Ascending aorta (tissue), 2 donors: ENCODE measurements at regions of chr11 and their contacts with region 1.

Region 1: DNA sequence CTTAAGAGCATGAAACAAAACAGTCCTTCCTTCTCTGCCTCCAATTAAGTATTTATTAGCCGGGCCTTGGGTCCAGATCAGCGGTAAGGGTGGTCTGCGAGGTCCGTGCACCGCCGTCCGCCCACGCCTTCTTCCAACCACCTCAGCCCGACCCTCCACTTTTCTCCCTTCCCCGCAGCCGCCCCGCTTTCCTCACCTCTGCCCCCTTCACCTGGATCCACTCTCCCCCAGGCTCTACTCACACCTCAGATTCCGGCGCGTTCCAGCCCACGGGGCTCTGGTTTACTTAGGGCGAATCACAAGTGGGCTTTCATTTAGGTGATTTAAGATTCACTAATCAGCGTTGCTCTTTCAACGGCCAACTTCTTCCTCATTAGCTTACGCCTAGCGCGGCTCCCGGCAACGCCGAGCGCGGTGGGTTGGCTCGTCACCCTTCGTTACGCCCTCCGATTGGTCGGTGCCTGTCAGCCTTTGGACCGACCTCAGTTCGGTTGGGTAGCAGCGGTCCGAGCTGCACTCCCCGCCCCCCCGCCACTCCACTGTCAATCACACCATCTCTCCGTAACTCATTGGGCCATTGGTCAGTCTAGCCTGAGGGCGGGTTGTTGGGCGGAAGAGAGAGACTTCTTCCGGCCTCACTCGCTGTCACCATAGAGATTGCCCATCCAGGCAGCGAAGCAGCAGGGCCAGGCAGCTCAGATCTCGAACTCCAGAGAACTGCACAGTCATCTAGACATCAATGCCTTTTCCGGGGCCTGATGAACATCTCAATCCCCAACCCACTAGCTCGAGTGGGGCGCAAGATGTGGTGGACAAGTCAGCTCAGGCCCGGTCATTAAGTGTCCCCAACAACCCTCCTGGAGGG is at the start of gene TMEM218:
- DNase-seq: peak; percentile 98 to 99
- H3K4me3 ChIP-seq: peak within 1 kb of the TSS; percentile 71 to 76
- H3K27ac ChIP-seq: peak within 1 kb of the TSS; percentile 69
- H3K4me1 ChIP-seq: peaks cover 0 to 4% of the 10 kb centered on the region in 2 donors
- H3K27me3 ChIP-seq: no peaks in the 10 kb centered on the region
- CTCF ChIP-seq: no peak
- total RNA-seq, gene TMEM218: 0.64 TPM

Region 2: GRCh38 chr11:124114942-124115781 is 996.4 kb before region 1 on chr11 and contains the start of gene VWA5A:
- intact Hi-C with region 1: loop called (anchors 10 kb)
- DNase-seq: peak; percentile 44 to 92
- H3K4me3 ChIP-seq: peak within 1 kb of the TSS; percentile 49 to 72
- H3K27ac ChIP-seq: peak within 1 kb of the TSS; percentile 57 to 61
- H3K4me1 ChIP-seq: peaks cover 0 to 6% of the 10 kb centered on the region in 2 donors
- H3K27me3 ChIP-seq: no peaks in the 10 kb centered on the region
- CTCF ChIP-seq: no peak
- total RNA-seq, gene VWA5A: 7.6 TPM

Region 3: DNA sequence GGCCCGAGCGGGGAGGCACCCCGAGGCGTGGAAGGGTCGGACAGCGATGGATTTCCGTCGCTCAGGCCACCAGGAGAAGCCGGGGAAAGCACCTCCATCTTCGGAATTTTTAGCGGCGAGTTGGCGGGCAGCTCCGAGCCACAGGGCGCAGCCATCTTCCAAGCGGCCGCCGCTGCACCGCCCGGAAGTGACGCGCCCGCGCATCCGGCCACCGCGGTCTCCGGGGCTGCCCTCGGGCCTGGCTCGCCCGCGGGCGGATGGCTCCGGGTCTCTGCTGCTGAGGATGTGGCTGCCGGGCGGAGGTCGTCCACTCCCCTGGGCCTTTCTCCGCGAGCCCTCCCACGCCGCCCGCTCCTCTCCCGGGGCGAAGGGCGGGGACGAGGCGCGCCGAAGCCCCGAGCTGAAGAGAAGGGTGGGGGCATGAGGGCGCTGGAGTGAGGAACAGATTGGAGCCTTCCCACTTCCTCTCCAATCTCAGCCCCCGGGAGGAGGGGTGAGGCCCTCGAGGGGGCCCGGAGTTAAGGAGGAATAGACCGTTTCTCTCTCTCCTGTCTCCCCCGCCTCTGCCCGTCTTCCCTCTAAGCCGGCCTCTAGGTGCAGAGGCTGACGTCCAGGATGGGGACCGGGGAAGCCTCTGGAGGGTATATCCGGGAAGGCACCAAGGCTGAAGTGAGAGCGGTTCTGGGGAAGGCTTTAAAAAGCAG is 311.2 kb before region 1 on chr11 and contains the start of gene MSANTD2:
- intact Hi-C with region 1: loop called (anchors 10 kb)
- DNase-seq: peak; percentile 19 to 87
- H3K4me3 ChIP-seq: peak within 1 kb of the TSS; percentile 81 to 98
- H3K27ac ChIP-seq: peak within 1 kb of the TSS; percentile 99
- H3K4me1 ChIP-seq: peaks cover 13 to 16% of the 10 kb centered on the region in 2 donors
- H3K27me3 ChIP-seq: no peaks in the 10 kb centered on the region
- CTCF ChIP-seq: no peak
- total RNA-seq, gene MSANTD2: 21.4 TPM

Region 4: DNA sequence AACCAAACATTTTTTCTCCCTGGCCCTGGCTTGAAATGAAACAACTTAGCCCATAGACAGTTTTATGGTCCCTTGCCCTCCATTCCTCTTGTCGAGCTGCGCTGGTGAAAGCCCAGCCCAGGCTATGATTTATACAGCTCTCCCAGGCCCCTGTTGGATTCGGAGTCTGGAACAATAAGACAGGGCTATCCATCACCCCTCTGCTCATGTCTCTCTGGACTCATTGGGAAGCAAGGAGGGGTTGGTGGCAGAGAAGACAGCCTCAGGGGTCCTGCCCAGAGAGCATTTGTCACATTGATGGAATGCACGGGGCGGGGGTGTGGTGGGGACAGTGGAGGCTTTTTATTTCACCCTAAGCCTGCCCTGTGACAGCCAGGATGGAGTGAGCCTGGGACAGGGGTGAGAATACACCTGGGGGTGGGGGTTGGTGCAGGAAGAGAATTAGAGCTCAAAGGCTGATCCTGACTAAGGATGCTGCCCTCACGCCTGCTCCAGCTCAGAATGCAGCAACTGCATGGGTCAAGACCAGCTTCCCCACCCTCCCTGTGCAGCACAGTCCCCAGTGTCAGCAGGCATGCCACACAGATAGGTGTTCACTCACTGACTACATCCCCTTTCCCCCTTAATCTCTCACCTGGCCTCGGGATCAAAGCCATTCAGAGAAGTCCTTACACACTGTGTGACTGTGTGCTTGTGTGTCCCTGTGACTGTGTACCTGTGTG is 43.0 kb after region 1 on chr11:
- intact Hi-C with region 1: no loop called
- DNase-seq: peak in 1 of 2 donors; percentile 42
- H3K4me3 ChIP-seq: no peak overlapping the region
- H3K27ac ChIP-seq: no peak overlapping the region
- H3K4me1 ChIP-seq: no peaks in the 10 kb centered on the region
- H3K27me3 ChIP-seq: no peaks in the 10 kb centered on the region
- CTCF ChIP-seq: no peak

Region 5: GRCh38 chr11:125164422-125165110 is 53.0 kb after region 1 on chr11 and contains the start of gene PKNOX2:
- intact Hi-C with region 1: loop called (anchors 2 kb)
- DNase-seq: peak in 1 of 2 donors; percentile 83
- H3K4me3 ChIP-seq: peak within 1 kb of the TSS; percentile 52 to 82
- H3K27ac ChIP-seq: peak within 1 kb of the TSS; percentile 80 to 91
- H3K4me1 ChIP-seq: peaks cover 8 to 26% of the 10 kb centered on the region in 2 donors
- H3K27me3 ChIP-seq: no peaks in the 10 kb centered on the region
- CTCF ChIP-seq: peak; percentile 40 to 85 (median 73)
- total RNA-seq, gene PKNOX2: 12.1 TPM

Region 6: DNA sequence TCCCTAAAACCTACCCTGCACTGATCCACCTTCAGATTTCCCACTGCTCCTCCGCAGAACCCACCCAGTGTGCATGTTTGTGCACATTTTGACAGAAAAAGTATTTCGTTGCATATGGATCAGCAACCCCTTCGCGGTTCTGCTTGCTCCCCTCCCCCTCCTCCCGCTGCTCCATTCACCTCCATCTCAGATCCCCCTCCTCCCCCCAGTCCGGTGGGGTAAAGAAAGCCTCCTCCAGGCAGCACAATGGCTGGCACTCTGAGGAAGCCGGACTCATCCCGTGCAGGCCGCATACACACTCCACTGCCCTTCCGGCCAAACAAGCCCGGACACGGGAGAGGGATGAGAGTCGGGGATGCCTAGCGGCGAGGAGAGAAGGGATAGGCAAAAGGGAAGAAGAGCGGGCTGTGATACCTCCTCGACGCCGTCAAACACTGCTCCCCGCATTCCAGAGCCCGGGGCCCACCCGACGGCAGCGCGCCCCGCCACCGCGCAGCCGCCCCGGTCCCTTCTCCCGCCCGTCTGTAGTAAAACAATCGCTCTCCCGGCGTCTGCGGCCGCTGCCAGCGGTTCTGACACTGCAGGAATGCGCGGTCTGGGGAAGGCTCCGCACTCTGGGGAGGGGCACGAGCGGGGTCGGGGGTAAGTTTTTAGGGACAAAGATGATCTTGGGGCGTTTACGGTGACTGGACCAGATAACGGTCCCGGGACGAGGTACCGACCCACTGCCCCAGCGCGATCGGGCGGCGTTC is 383.6 kb after region 1 on chr11:
- intact Hi-C with region 1: loop called (anchors 10 kb)
- DNase-seq: peak in 1 of 2 donors; percentile 72
- H3K4me3 ChIP-seq: peak overlapping the region; percentile 63 to 98
- H3K27ac ChIP-seq: peak overlapping the region; percentile 80 to 96
- H3K4me1 ChIP-seq: peaks cover 7 to 8% of the 10 kb centered on the region in 2 donors
- H3K27me3 ChIP-seq: no peaks in the 10 kb centered on the region
- CTCF ChIP-seq: no peak

Region 7: GRCh38 chr11:126268708-126269579 is 1157.4 kb after region 1 on chr11 and contains the starts of genes FOXRED1 and SRPRA:
- intact Hi-C with region 1: loop called (anchors 5 kb)
- DNase-seq: peak; percentile 97 to 100
- H3K4me3 ChIP-seq: peak within 1 kb of the TSS; percentile 81 to 93
- H3K27ac ChIP-seq: peak within 1 kb of the TSS; percentile 90 to 91
- H3K4me1 ChIP-seq: peaks cover 0 to 13% of the 10 kb centered on the region in 2 donors
- H3K27me3 ChIP-seq: no peaks in the 10 kb centered on the region
- CTCF ChIP-seq: no peak
- total RNA-seq, gene FOXRED1: 1.8 TPM
- total RNA-seq, gene SRPRA: 49.7 TPM